ENCODE measurements at regions of chr1 and their contacts with region 1.

Region 1: DNA sequence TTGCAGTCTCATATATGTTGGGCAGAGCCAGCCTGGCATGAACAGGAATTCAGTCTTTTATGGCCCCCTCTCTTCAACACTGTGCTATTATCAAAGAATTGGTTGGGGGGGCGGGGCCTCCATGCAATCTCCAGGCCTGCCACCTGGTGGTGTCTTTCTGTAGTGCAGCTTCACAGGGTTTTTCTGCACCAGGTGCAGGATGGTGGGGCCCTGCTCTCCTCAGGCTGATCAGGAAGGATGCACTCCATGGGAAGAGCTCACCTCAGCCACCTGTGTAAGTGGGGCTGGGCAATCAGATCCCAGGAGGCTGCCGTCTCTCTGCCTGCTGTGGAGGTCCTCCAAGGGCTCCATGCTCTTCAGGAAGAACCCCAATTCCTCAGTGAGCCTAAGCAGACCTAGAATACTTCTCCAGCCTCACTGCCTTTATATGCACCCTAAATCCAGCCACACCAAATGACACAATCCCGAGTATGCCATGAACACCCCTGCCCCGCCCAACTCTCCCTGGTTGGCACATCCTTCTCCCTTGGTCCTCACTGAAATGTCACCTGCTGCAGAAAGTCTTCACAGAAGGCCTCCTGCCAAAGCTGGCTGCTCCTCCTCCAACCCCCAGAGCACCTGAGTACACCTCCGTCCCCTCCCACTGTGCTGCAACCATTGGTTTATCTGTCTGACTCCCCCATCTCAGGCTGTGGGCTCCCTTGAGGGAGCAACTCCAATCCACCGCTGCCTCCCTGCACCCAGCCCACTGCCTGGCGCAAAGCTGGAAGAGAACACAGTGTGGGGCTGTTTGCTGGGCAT is 16.5 kb downstream of the STK40 start:
- DNase-seq: peak; percentile 77
- H3K4me3 ChIP-seq: no peak overlapping the region
- H3K27ac ChIP-seq: peak overlapping the region; percentile 54
- H3K4me1 ChIP-seq: peaks cover 47% of the 10 kb centered on the region
- H3K27me3 ChIP-seq: no peaks in the 10 kb centered on the region
- CTCF ChIP-seq: peak; percentile 89 to 91
- POLR2A ChIP-seq: no peak

Region 2: DNA sequence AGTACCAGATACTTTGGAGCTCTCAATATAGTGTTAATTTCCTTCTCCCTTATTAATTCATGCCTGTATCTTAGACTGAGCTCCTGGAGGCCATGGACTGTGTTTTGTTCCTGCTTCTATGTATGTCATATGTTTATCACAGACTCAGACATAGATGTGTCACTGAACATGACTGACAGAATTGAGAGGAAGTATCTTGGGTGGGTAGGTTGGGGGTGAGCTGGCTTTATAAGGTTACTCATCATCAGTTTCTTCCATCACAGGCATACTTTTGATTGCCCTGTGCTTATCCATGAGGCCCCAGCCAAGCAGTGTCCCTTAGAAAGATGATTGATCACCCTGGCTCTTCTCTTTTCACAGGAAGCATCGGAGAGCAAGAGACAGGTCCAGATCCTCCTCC is 68.7 kb before region 1 on chr1:
- CTCF ChIA-PET with region 1: interaction called, 10 read pairs
- POLR2A ChIA-PET with region 1: no interaction called
- dilution Hi-C with region 1: no loop called
- intact Hi-C with region 1: no loop called
- DNase-seq: no peak
- H3K4me3 ChIP-seq: no peak overlapping the region
- H3K27ac ChIP-seq: peak overlapping the region; percentile 1
- H3K4me1 ChIP-seq: peaks cover 15% of the 10 kb centered on the region
- H3K27me3 ChIP-seq: no peaks in the 10 kb centered on the region
- CTCF ChIP-seq: no peak
- POLR2A ChIP-seq: no peak

Region 3: GRCh38 chr1:36323597-36324352 is 45.5 kb before region 1 on chr1 and contains the start of gene EVA1B:
- CTCF ChIA-PET with region 1: interaction called, 6 read pairs
- POLR2A ChIA-PET with region 1: no interaction called
- dilution Hi-C with region 1: no loop called
- intact Hi-C with region 1: loop called (anchors 1 kb)
- DNase-seq: peak; percentile 90
- H3K4me3 ChIP-seq: peak within 1 kb of the TSS; percentile 61 to 85 (median 71)
- H3K27ac ChIP-seq: peak within 1 kb of the TSS; percentile 62
- H3K4me1 ChIP-seq: peaks cover 15% of the 10 kb centered on the region
- H3K27me3 ChIP-seq: no peaks in the 10 kb centered on the region
- CTCF ChIP-seq: no peak
- POLR2A ChIP-seq: no peak
- total RNA-seq, gene EVA1B: 63.2 and 64.7 TPM in 2 replicates

Region 4: DNA sequence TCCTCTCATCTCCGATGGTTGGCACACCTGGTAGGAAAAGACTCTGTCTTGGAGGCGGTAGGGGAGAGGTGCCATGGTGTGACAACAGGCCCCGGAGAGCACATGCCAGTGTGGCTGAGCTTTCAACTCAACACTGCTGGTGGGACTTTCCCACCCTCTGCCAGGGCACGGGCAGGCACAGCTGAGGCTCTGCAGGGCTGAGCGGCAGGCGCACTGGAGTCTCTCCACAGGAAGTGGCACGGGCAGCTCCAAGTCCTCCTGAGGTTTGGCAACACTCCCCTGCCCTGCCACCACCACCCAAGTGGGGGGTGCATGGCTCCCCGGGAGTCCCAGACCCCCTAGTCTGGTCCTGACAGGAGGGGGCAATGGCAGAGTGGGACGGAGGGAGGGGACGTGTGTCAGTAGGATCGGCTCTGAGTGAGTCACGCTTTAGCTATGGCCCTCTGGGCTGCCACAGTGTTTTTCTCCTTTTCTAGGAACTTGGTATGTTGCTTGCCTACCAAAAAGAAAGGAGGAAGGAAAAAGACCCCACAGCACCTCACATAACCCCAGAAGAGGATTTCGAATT is 18.5 kb before region 1 on chr1:
- CTCF ChIA-PET with region 1: interaction called, 152 read pairs
- POLR2A ChIA-PET with region 1: interaction called, 4 read pairs
- dilution Hi-C with region 1: no loop called
- intact Hi-C with region 1: loop called (anchors 1 kb)
- DNase-seq: peak; percentile 85
- H3K4me3 ChIP-seq: no peak overlapping the region
- H3K27ac ChIP-seq: peak overlapping the region; percentile 89
- H3K4me1 ChIP-seq: peaks cover 49% of the 10 kb centered on the region
- H3K27me3 ChIP-seq: no peaks in the 10 kb centered on the region
- CTCF ChIP-seq: no peak
- POLR2A ChIP-seq: no peak

Region 5: DNA sequence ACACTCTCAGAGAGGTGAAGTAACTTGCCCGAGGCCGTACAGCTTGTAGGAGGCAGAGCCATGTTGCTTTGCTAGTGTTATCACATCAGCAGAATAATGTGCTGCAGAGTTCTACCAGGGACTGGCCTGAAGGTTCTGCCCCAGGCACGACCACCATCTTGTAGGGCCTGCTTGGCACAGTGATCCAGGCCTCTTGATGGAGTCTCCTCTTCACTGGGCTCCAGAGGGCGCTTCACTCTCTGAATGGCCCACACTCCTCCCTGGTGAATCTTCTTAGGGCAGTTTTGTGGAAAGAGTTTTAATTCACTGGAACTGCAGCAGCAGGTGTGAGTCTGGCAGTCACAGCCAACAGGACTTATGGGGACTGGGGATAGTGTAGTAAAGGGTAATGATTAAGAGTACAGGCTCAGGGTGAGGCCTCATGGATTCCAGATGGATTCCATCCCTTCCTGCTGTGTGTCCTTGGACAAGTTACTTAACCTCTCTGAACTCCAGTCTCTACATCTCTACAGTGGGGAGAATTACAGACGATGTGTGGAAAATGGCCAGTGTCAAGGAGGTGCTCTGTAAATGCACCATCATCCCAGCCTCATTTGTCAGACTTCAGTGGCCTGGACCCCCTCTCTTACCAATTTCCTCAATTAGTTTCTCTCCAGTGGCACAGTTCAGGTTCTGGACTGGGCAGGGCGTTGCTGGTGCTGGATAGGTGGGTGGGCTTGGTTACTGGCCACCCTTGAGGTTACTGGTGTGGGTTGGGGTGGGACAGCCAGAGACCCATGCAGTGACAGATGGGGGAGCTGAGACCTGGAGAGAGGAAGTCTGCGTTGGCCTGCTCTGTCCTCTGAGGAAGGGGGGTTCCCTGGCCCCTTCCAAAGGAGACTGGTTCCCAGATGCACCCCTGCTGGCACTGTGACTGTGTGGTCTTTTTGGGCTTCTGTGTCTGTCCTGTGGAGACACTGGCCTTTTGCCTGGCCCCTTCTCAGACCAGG is 159.4 kb after region 1 on chr1:
- CTCF ChIA-PET with region 1: no interaction called
- POLR2A ChIA-PET with region 1: no interaction called
- dilution Hi-C with region 1: no loop called
- intact Hi-C with region 1: no loop called
- DNase-seq: no peak
- H3K4me3 ChIP-seq: no peak overlapping the region
- H3K27ac ChIP-seq: no peak overlapping the region
- H3K4me1 ChIP-seq: no peaks in the 10 kb centered on the region
- H3K27me3 ChIP-seq: peaks cover 0 to 2% of the 10 kb centered on the region in 2 experiments
- CTCF ChIP-seq: no peak
- POLR2A ChIP-seq: no peak